Calu3 (cell line): ENCODE measurements at regions of chr6 and their contacts with region 1.

Region 1: GRCh38 chr6:36576561-36576960 is 17.6 kb upstream of the SRSF3 start:
- DNase-seq: no peak
- H3K4me3 Mint-ChIP-seq: peak overlapping the region; percentile 3
- H3K27ac Mint-ChIP-seq: peak overlapping the region; percentile 95
- H3K4me1 Mint-ChIP-seq: peaks cover 39% of the 10 kb centered on the region
- H3K27me3 Mint-ChIP-seq: no peaks in the 10 kb centered on the region
- CTCF ChIP-seq: no peak

Region 2: DNA sequence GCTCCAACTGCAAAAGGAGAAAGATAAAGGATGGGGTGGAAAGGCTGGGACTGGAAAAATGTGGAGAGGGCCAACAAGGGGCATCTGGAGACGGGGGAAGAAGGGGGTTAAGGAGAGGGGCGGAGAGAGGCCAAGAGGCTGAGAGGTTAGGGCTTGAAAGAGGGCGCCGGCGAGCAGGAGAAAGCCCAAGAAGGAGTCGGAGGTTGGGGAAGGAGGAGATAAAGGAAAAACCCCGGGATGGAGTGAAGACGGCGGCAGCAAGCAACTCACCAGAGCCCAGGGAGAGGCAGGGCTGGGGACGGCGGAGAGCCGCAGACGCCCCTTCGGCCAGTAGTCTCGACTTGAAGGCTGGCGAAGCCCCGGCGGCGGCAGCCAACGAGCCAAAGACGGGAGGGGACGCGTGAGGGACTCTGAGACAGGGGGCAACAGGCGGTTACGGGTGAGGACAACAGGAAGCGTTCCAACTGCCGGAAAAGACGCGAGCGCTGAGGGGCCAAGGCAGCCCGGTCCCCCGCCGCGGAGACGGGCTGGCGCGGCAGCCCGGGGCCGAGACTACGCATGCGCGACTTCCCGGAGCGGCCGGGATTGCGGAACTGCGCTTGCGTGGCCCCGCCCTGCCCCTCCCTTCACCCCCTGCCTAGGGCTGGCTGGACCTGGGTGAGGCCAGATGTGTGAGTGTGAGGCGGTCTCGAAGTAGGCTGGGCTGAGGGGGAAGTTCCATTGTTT is 29.5 kb before region 1 on chr6 and contains the start of gene STK38:
- CTCF ChIA-PET with region 1: interaction called, 30 read pairs
- intact Hi-C with region 1: loop called (anchors 1 kb)
- DNase-seq: peak; percentile 94
- H3K4me3 Mint-ChIP-seq: peak within 1 kb of the TSS; percentile 98
- H3K27ac Mint-ChIP-seq: peak within 1 kb of the TSS; percentile 96
- H3K4me1 Mint-ChIP-seq: peaks cover 20% of the 10 kb centered on the region
- H3K27me3 Mint-ChIP-seq: no peaks in the 10 kb centered on the region
- CTCF ChIP-seq: no peak
- total RNA-seq, gene STK38: 63.0 and 70.3 TPM in 2 replicates